K562 (cell line): ENCODE measurements at regions of chr7 and their contacts with region 1.

Region 1: GRCh38 chr7:127683776-127684681 is 32.0 kb downstream of the SND1 start:
- DNase-seq: no peak
- ATAC-seq: peak; percentile 30; the same call in 1 of the 3 replicates
- H3K4me3 ChIP-seq: no peak overlapping the region
- H3K27ac ChIP-seq: no peak overlapping the region
- H3K4me1 ChIP-seq: no peaks in the 10 kb centered on the region
- H3K27me3 ChIP-seq: no peaks in the 10 kb centered on the region
- CTCF ChIP-seq: no peak
- EP300 ChIP-seq: no peak
- POLR2A ChIP-seq: no peak
- RAD21 ChIP-seq: no peak

Region 2: GRCh38 chr7:127673902-127674301 is 10.1 kb before region 1 on chr7:
- CTCF ChIA-PET with region 1: no interaction called
- POLR2A ChIA-PET with region 1: interaction called, 11 read pairs
- in situ Hi-C with region 1: no loop called
- intact Hi-C with region 1: no loop called
- DNase-seq: no peak
- ATAC-seq: no peak
- H3K4me3 ChIP-seq: no peak overlapping the region
- H3K27ac ChIP-seq: no peak overlapping the region
- H3K4me1 ChIP-seq: no peaks in the 10 kb centered on the region
- H3K27me3 ChIP-seq: no peaks in the 10 kb centered on the region
- CTCF ChIP-seq: no peak
- EP300 ChIP-seq: no peak
- POLR2A ChIP-seq: no peak
- RAD21 ChIP-seq: no peak

Region 3: GRCh38 chr7:127702052-127702652 is 18.1 kb after region 1 on chr7:
- CTCF ChIA-PET with region 1: no interaction called
- POLR2A ChIA-PET with region 1: no interaction called
- in situ Hi-C with region 1: no loop called
- intact Hi-C with region 1: no loop called
- DNase-seq: no peak
- ATAC-seq: no peak
- H3K4me3 ChIP-seq: no peak overlapping the region
- H3K27ac ChIP-seq: no peak overlapping the region; the same call in 2 of the 3 replicates
- H3K4me1 ChIP-seq: no peaks in the 10 kb centered on the region
- H3K27me3 ChIP-seq: no peaks in the 10 kb centered on the region
- CTCF ChIP-seq: no peak
- EP300 ChIP-seq: no peak
- POLR2A ChIP-seq: no peak
- RAD21 ChIP-seq: no peak